Caco-2 (cell line): ENCODE measurements at regions of chr1 and their contacts with region 1.

Region 1: GRCh38 chr1:159132271-159132881 is 39.0 kb upstream of the CADM3 start:
- DNase-seq: peak; percentile 49 to 69
- H3K4me3 ChIP-seq: no peak overlapping the region
- H3K4me3 Mint-ChIP-seq: no peak overlapping the region
- H3K27ac Mint-ChIP-seq: no peak overlapping the region
- H3K4me1 ChIP-seq: no peaks in the 10 kb centered on the region
- H3K4me1 Mint-ChIP-seq: no peaks in the 10 kb centered on the region
- H3K27me3 ChIP-seq: no peaks in the 10 kb centered on the region
- H3K27me3 Mint-ChIP-seq: no peaks in the 10 kb centered on the region
- CTCF ChIP-seq: peak; percentile 82 to 84

Region 2: DNA sequence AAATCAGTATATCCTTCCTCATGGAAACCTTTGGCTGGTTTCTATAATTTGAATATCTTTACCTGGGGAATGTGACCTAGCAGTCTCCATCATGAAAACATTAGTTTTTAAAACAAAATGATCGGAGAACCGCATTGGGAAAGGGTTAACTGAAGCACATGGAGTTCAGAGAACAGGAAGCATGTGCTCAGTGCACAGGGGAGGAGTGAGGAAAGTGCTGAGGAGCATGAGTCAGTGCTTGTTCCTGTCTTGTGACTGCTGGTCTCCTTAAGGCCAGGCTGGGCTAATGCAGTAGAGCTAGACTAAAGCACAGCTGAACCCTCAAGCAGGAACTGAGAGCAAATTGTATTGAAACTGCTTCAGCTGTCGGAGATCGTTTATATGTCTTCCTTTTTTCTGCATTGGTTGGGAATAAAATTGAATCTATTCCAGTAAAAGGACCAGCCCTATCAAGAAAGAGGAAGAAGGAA is 116.9 kb before region 1 on chr1:
- CTCF ChIA-PET with region 1: no interaction called
- POLR2A ChIA-PET with region 1: no interaction called
- intact Hi-C with region 1: no loop called
- DNase-seq: no peak
- H3K4me3 ChIP-seq: no peak overlapping the region
- H3K4me3 Mint-ChIP-seq: no peak overlapping the region
- H3K27ac Mint-ChIP-seq: no peak overlapping the region
- H3K4me1 ChIP-seq: no peaks in the 10 kb centered on the region
- H3K4me1 Mint-ChIP-seq: no peaks in the 10 kb centered on the region
- H3K27me3 ChIP-seq: no peaks in the 10 kb centered on the region
- H3K27me3 Mint-ChIP-seq: peaks cover 3% of the 10 kb centered on the region
- CTCF ChIP-seq: no peak

Region 3: GRCh38 chr1:159089184-159089791 is 43.1 kb before region 1 on chr1:
- CTCF ChIA-PET with region 1: no interaction called
- POLR2A ChIA-PET with region 1: no interaction called
- intact Hi-C with region 1: no loop called
- DNase-seq: no peak
- H3K4me3 ChIP-seq: no peak overlapping the region
- H3K4me3 Mint-ChIP-seq: no peak overlapping the region
- H3K27ac Mint-ChIP-seq: no peak overlapping the region
- H3K4me1 ChIP-seq: no peaks in the 10 kb centered on the region
- H3K4me1 Mint-ChIP-seq: no peaks in the 10 kb centered on the region
- H3K27me3 ChIP-seq: no peaks in the 10 kb centered on the region
- H3K27me3 Mint-ChIP-seq: peaks cover 6% of the 10 kb centered on the region
- CTCF ChIP-seq: peak; percentile 54 to 58

Region 4: DNA sequence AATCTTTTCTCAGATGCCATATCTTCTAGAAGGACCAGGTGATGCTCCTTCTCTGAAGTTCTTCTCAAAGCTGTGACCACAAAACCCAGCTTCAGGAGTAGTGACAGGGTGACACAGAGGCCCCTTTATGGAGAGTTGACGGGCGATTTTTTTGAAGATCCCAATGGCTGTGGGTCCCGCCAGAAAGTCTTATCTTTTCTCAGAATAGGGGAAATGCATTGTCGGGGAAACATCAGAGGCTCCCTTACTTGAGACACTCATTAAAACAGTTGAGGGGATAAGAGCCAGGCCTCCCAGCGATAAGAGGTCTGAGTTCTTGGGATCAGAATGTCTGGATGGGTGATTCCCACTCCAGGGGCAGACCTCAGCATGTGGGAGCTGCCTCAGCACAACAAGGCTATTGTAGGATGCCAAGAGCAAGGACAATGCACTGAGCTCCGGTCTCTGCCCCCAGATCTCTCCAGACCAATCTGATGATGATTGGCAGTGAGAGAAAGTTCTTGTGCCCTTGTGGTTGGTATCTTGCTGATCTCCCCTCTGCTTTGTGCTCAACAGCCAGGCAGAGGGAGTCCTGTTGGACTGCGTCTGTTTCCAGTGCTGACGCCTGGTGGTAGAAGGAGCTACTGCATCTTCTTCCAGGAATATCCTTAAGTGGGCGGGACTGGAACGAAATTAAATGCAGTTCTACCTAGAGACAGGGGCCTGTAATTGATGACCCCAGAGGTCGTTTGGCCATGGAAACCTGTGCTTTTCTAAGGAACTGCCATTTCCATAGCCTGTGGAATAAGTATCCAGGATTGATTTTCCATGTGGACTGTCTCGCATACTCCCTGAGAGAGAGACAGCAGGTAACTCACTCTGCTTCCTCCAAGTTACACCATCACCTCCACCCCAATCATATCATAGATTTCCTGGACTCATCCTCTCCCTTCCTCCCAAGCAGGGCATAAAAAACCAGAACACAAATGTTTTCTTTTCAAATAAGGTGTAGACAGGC is 65.5 kb after region 1 on chr1:
- CTCF ChIA-PET with region 1: interaction called, 8 read pairs
- POLR2A ChIA-PET with region 1: no interaction called
- intact Hi-C with region 1: loop called (anchors 1 kb)
- DNase-seq: peak; percentile 74 to 77
- H3K4me3 ChIP-seq: no peak overlapping the region
- H3K4me3 Mint-ChIP-seq: no peak overlapping the region
- H3K27ac Mint-ChIP-seq: no peak overlapping the region
- H3K4me1 ChIP-seq: no peaks in the 10 kb centered on the region
- H3K4me1 Mint-ChIP-seq: no peaks in the 10 kb centered on the region
- H3K27me3 ChIP-seq: peaks cover 1% of the 10 kb centered on the region; the same call in 1 of the 2 replicates
- H3K27me3 Mint-ChIP-seq: peaks cover 30% of the 10 kb centered on the region
- CTCF ChIP-seq: peak; percentile 68 to 89

Region 5: GRCh38 chr1:159214149-159214760 is 81.9 kb after region 1 on chr1:
- CTCF ChIA-PET with region 1: interaction called, 10 read pairs
- POLR2A ChIA-PET with region 1: no interaction called
- intact Hi-C with region 1: loop called (anchors 1 kb)
- DNase-seq: peak; percentile 47 to 65
- H3K4me3 ChIP-seq: no peak overlapping the region
- H3K4me3 Mint-ChIP-seq: no peak overlapping the region
- H3K27ac Mint-ChIP-seq: no peak overlapping the region
- H3K4me1 ChIP-seq: no peaks in the 10 kb centered on the region
- H3K4me1 Mint-ChIP-seq: peaks cover 10% of the 10 kb centered on the region
- H3K27me3 ChIP-seq: no peaks in the 10 kb centered on the region
- H3K27me3 Mint-ChIP-seq: peaks cover 9% of the 10 kb centered on the region
- CTCF ChIP-seq: peak; percentile 89